ENCODE measurements at regions of chr12 and their contacts with region 1.

Region 1: GRCh38 chr12:79737875-79738718 is 47.3 kb upstream of the PAWR start:
- DNase-seq: peak; percentile 54
- ATAC-seq: peak; percentile 87
- H3K4me3 ChIP-seq: no peak overlapping the region
- H3K27ac ChIP-seq: no peak overlapping the region
- H3K4me1 ChIP-seq: no peaks in the 10 kb centered on the region
- H3K27me3 ChIP-seq: no peaks in the 10 kb centered on the region
- CTCF ChIP-seq: peak; percentile 61 to 80 (median 65); a peak in 5 of 6 replicates
- POLR2A ChIP-seq: no peak
- RAD21 ChIP-seq: peak; percentile 81

Region 2: GRCh38 chr12:79407671-79408622 is 330.1 kb before region 1 on chr12:
- CTCF ChIA-PET with region 1: no interaction called
- POLR2A ChIA-PET with region 1: no interaction called
- RAD21 ChIA-PET with region 1: no interaction called
- intact Hi-C with region 1: loop called (anchors 5 kb)
- DNase-seq: peak; percentile 63
- ATAC-seq: peak; percentile 99
- H3K4me3 ChIP-seq: no peak overlapping the region
- H3K27ac ChIP-seq: no peak overlapping the region
- H3K4me1 ChIP-seq: no peaks in the 10 kb centered on the region
- H3K27me3 ChIP-seq: no peaks in the 10 kb centered on the region
- CTCF ChIP-seq: peak; percentile 54 to 79 (median 60); a peak in 5 of 6 replicates
- POLR2A ChIP-seq: no peak
- RAD21 ChIP-seq: peak; percentile 83

Region 3: DNA sequence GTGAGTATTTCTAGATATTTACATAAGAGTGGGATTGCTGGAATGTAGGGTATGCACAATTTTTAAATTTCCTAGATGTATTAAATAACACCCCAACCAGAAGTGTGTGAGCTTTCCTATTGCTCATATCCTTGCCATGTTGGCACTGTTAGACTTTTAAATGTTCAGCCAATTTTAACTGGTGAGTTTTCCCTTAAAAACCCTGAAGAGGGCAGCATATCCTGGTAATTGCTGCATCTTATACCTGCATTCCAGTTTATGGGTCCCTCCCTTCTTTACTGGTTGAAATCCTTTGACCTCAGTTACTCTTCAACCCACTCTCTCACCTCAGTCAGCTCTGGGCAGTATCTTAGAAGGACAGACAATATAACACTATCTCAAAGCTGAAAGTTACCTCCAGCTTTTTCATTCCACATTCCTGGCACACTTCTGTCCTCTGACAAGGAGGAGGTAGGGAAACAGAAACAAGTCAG is 317.9 kb before region 1 on chr12:
- CTCF ChIA-PET with region 1: interaction called, 4 read pairs
- POLR2A ChIA-PET with region 1: no interaction called
- RAD21 ChIA-PET with region 1: no interaction called
- intact Hi-C with region 1: loop called (anchors 5 kb)
- DNase-seq: peak; percentile 45
- ATAC-seq: peak; percentile 88
- H3K4me3 ChIP-seq: no peak overlapping the region
- H3K27ac ChIP-seq: no peak overlapping the region
- H3K4me1 ChIP-seq: peaks cover 6 to 26% of the 10 kb centered on the region in 2 experiments; a peak in 3 of 4 replicates
- H3K27me3 ChIP-seq: no peaks in the 10 kb centered on the region
- CTCF ChIP-seq: peak; percentile 48 to 69 (median 53); a peak in 5 of 6 replicates
- POLR2A ChIP-seq: no peak
- RAD21 ChIP-seq: peak; percentile 78

Region 4: DNA sequence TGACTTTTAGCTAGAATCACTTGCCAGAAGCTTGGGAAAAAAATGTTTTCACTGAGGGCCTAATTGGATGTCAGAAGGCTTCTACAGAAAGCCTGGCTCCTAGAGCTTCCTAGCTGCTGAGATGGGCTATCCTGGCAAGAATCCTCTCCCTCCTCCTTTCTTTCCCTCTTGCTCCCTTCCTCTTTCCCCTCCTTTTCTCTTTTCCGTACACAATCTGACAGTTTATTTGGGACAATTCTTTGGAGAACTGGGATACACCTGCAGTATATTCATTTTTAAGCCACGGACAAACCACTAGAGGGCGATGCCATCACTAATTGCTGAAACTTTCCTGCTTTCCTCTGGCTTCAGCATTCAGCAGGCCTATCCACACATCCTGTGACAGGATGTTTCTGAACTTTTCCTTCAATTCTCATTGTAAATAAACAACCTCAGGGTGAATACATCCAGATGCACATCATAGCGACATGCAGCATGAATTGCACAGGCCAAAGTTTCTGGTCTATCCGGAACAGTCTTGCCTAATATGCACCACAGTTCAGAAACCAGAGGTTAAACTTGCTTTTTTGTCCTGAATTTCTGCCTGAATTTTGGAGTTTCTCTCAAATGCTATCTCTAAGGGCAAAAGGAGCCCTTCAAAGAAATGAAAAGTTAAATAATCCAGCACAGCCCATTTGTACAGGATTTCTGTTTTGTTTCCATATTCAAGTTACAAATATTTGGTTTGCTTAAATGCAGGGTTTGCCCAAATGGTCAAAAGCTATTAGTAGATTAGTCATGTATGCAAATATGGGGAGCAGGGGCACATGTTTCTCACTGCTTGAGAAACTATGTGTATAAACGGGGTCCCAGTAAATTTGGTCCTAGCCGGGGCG is 190.1 kb before region 1 on chr12:
- CTCF ChIA-PET with region 1: interaction called, 3 read pairs
- POLR2A ChIA-PET with region 1: interaction called, 3 read pairs
- RAD21 ChIA-PET with region 1: no interaction called
- intact Hi-C with region 1: loop called (anchors 2 kb)
- DNase-seq: peak; percentile 34
- ATAC-seq: peak; percentile 58
- H3K4me3 ChIP-seq: peak overlapping the region in 1 of 2 experiments; percentile 30; a peak in 2 of 4 replicates
- H3K27ac ChIP-seq: peak overlapping the region; percentile 85
- H3K4me1 ChIP-seq: peaks cover 28 to 48% of the 10 kb centered on the region in 2 experiments
- H3K27me3 ChIP-seq: no peaks in the 10 kb centered on the region
- CTCF ChIP-seq: peak; percentile 52 to 78 (median 70); a peak in 5 of 6 replicates
- POLR2A ChIP-seq: no peak
- RAD21 ChIP-seq: peak; percentile 62

Region 5: GRCh38 chr12:79555028-79555930 is 182.8 kb before region 1 on chr12:
- CTCF ChIA-PET with region 1: interaction called, 3 read pairs
- POLR2A ChIA-PET with region 1: no interaction called
- RAD21 ChIA-PET with region 1: no interaction called
- intact Hi-C with region 1: loop called (anchors 2 kb)
- DNase-seq: peak; percentile 26
- ATAC-seq: no peak
- H3K4me3 ChIP-seq: no peak overlapping the region
- H3K27ac ChIP-seq: no peak overlapping the region
- H3K4me1 ChIP-seq: no peaks in the 10 kb centered on the region; a peak in 1 of 4 replicates
- H3K27me3 ChIP-seq: no peaks in the 10 kb centered on the region
- CTCF ChIP-seq: peak; percentile 50 to 68 (median 66); a peak in 5 of 6 replicates
- POLR2A ChIP-seq: no peak
- RAD21 ChIP-seq: peak; percentile 85

Measured in HCT116 (cell line).